ENCODE measurements at regions of chr3 and their contacts with region 1.

Region 1: GRCh38 chr3:134373994-134374790 is at the start of gene AMOTL2:
- DNase-seq: peak; percentile 88 to 96 (median 94)
- ATAC-seq: peak; percentile 87 to 89
- H3K4me3 ChIP-seq: peak within 1 kb of the TSS; percentile 77
- H3K27ac ChIP-seq: peak within 1 kb of the TSS; percentile 99
- H3K4me1 ChIP-seq: peaks cover 27% of the 10 kb centered on the region
- H3K27me3 ChIP-seq: no peaks in the 10 kb centered on the region
- total RNA-seq, gene AMOTL2: 44.6 to 57.6 (median 47.6) TPM

Region 2: GRCh38 chr3:133717424-133717823 is 656.8 kb before region 1 on chr3:
- intact Hi-C with region 1: no loop called
- DNase-seq: no peak
- ATAC-seq: no peak
- H3K4me3 ChIP-seq: no peak overlapping the region
- H3K27ac ChIP-seq: no peak overlapping the region
- H3K4me1 ChIP-seq: no peaks in the 10 kb centered on the region
- H3K27me3 ChIP-seq: no peaks in the 10 kb centered on the region

Region 3: DNA sequence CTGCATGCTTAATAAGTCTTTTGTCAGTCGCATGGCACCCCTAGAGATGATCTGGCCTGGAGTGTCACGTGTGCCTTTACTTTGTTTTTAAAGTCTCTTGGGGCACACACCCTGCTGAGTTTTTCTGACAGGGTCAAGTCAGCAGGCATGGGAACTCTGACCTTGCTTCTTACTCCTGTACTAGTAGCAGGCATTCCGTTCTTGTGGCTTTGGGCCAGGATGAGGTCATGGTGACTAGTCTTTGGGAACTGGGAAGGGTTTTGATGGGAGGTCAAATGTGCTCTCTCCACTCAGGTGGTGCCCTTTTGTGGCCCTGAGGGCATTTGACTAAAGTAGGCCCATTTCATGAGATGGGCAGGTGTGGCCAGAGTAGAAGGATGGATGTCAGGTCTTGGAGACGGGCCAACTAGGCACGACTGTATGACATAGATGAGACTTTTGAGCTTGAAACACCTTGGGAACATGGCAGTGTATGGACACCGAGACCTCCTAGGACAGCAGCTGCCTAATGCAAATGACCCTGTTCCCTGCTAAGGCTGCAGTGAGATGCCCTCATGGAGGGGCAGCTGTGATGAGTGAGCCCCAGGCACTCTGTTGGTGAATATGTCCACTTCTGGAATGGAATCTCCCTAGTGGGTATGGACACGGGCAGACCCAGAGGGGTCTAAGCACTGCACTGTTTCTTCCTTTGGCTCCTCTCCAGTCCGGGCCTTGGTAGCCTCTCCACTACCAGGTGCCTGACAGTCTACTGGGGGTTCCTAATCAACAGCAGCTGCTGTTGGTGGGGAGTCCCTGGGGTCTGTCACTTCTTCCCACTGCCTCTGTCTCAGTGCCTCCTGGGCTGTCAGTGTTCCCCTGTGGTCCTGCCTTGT is 552.2 kb before region 1 on chr3:
- intact Hi-C with region 1: no loop called
- DNase-seq: peak; percentile 72 to 89 (median 86)
- ATAC-seq: peak; percentile 49 to 87
- H3K4me3 ChIP-seq: no peak overlapping the region
- H3K27ac ChIP-seq: no peak overlapping the region
- H3K4me1 ChIP-seq: no peaks in the 10 kb centered on the region
- H3K27me3 ChIP-seq: no peaks in the 10 kb centered on the region

Region 4: GRCh38 chr3:134212906-134213665 is 161.1 kb before region 1 on chr3:
- intact Hi-C with region 1: loop called in 1 of 4 experiments (anchors 10 kb)
- DNase-seq: peak; percentile 75 to 90 (median 87)
- ATAC-seq: peak; percentile 77 to 84
- H3K4me3 ChIP-seq: no peak overlapping the region
- H3K27ac ChIP-seq: no peak overlapping the region
- H3K4me1 ChIP-seq: peaks cover 4% of the 10 kb centered on the region
- H3K27me3 ChIP-seq: no peaks in the 10 kb centered on the region

Region 5: DNA sequence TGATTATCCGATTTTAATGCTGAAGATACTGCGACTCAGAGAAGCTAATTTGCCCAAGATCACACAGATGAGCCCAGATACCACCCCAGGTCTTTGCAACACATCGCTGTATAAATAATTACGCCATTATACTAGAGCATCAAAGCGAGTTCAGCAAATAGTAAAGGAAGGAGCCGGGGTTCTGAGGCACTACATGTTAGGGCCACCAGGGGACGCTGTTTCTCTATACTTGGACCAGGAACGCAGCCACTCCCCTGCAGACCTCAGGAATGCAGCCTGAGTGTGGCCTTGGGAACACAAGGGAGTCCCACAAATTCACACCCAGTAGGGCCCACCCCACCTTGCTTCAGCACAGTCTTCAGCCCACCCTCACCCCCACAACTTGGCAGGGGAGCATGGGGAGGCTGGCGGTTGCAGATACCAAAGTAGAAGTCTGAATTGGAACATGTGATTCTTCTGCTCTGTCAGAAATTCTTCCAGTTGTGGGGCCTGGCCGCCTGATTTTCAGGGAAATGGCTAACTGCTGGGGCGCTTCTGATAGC is 65.8 kb before region 1 on chr3:
- intact Hi-C with region 1: loop called (anchors 2 to 5 kb)
- DNase-seq: peak; percentile 83 to 92 (median 89)
- ATAC-seq: peak; percentile 79 to 82
- H3K4me3 ChIP-seq: no peak overlapping the region
- H3K27ac ChIP-seq: peak overlapping the region; percentile 66
- H3K4me1 ChIP-seq: peaks cover 7% of the 10 kb centered on the region
- H3K27me3 ChIP-seq: no peaks in the 10 kb centered on the region

Region 6: DNA sequence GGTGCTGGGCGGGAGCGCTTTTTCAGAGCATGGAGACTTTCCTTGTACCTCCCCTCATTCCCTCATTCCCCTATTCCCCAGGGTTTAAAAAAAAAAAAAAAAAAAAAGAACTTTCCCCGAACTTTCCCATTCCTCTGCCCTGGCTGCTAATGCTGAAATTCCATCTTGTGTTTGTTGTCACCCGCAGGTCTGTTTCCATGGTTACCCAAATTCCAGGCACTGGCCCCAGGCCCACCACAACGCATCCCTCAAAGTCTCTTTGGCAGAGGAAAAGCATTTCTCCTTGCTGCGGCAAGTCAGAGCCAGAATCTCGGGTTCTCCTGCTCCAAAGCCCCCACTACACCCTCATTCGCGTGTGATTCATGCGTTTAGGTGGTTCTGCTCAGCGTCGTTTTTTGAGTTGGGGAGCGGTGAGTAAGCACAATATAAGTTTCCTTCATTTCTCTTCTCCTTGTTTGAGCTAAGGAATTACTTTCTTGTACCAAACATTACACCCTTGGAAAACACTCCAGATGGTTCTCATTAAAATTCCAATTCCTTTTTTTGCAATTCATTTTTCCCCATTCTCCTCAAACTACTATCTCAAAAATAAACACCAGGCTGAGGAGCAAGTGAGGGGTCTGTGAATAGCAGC is 90.0 kb after region 1 on chr3:
- intact Hi-C with region 1: loop called in 1 of 4 experiments (anchors 5 kb)
- DNase-seq: peak; percentile 77 to 92 (median 91)
- ATAC-seq: peak; percentile 71 to 80
- H3K4me3 ChIP-seq: no peak overlapping the region
- H3K27ac ChIP-seq: peak overlapping the region; percentile 40
- H3K4me1 ChIP-seq: peaks cover 6% of the 10 kb centered on the region
- H3K27me3 ChIP-seq: no peaks in the 10 kb centered on the region